Right ventricle myocardium superior (tissue), 1 donor: ENCODE measurements at regions of chr1 and their contacts with region 1.

Region 1: GRCh38 chr1:199243423-199244061 is 604.7 kb downstream of the PTPRC start:
- DNase-seq: peak; percentile 62
- ATAC-seq: peak; percentile 81

Region 2: DNA sequence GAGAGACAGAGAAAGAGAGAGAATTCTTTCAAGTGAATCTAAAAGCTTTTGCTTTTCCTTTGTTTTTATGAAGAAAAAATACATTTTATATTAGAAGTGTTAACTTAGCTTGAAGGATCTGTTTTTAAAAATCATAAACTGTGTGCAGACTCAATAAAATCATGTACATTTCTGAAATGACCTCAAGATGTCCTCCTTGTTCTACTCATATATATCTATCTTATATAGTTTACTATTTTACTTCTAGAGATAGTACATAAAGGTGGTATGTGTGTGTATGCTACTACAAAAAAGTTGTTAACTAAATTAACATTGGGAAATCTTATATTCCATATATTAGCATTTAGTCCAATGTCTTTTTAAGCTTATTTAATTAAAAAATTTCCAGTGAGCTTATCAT is 487.1 kb before region 1 on chr1:
- intact Hi-C with region 1: loop called (anchors 10 kb)
- DNase-seq: no peak
- ATAC-seq: no peak

Region 3: DNA sequence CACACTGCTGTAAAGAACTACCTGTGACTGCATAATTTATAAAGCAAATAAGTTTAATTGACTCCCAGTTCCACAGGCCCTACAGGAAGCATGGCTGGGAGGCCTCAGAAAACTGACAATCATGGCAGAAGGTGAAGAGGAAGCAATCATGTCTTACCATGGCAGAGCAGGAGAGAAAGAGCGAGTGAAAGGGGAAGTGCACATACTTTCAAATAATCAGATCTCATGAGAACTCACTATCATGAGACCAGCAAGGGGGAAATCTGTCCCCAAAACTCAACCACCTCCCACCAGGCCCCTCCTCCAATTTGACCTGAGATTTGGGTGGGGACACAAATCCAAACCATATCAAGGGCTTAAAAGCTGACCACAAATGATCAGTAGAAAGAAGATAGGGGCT is 111.5 kb before region 1 on chr1:
- intact Hi-C with region 1: no loop called
- DNase-seq: no peak
- ATAC-seq: no peak

Region 4: DNA sequence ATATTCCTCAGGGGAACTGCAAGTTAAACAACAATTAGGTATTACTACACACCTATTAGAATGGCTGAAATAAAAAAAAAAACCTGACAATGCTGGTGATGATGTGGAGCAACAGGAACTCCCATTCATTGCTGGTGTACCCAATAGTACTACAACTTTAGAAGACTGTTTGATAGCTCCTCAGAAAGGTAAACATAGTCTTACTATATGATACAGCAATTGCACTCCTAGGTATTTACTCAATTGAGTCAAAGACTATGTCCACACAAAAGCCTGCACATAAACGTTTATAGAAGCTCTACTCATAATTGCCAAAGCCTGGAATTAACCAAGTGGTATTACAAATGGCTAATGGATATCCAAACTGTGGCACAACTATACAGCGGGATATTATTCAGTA is 259.3 kb after region 1 on chr1:
- intact Hi-C with region 1: no loop called
- DNase-seq: no peak
- ATAC-seq: no peak